ENCODE measurements at regions of chr3 and their contacts with region 1.

Region 1: DNA sequence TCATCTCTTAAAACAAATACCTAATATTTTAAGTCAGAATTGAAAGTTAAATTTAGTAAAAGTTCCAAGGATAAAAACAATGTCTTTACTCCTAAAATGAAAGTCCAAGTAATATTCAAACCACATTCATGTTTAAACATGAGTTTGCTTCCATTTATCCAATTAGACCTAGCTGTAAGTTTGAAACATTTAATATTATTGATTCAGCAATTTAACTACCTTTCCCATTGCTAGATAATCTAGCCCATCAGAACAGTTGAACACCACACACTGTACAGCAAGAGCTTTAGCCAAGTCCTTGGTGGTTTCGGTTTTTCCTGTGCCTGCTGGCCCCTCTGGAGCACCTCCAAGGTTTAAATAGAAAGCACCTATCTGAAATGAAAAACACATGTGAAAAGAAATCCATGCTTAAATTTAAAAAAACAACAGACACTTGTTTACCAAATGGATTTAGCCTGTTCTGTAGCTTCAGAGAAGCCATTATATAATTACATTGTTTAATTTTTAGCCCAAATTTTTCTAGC is 97.8 kb downstream of the DNAH12 start:
- DNase-seq: no peak
- ATAC-seq: no peak
- H3K4me3 ChIP-seq: no peak overlapping the region
- H3K27ac ChIP-seq: no peak overlapping the region
- H3K4me1 ChIP-seq: peaks cover 49% of the 10 kb centered on the region
- H3K27me3 ChIP-seq: no peaks in the 10 kb centered on the region; a peak in 1 of 5 replicates
- CTCF ChIP-seq: no peak
- EP300 ChIP-seq: no peak
- POLR2A ChIP-seq: no peak
- RAD21 ChIP-seq: no peak

Region 2: GRCh38 chr3:57199895-57200297 is 246.5 kb before region 1 on chr3 and contains the start of gene HESX1:
- CTCF ChIA-PET with region 1: no interaction called
- POLR2A ChIA-PET with region 1: no interaction called
- in situ Hi-C with region 1: no loop called
- intact Hi-C with region 1: no loop called
- DNase-seq: no peak
- ATAC-seq: no peak
- H3K4me3 ChIP-seq: no peak within 1 kb of the TSS
- H3K27ac ChIP-seq: no peak within 1 kb of the TSS
- H3K4me1 ChIP-seq: no peaks in the 10 kb centered on the region
- H3K27me3 ChIP-seq: no peaks in the 10 kb centered on the region; a peak in 1 of 5 replicates
- CTCF ChIP-seq: no peak
- EP300 ChIP-seq: no peak
- POLR2A ChIP-seq: no peak
- RAD21 ChIP-seq: no peak
- total RNA-seq, gene HESX1: 0.75 and 0.97 TPM in 2 replicates

Region 3: GRCh38 chr3:57434041-57434440 is 12.3 kb before region 1 on chr3:
- CTCF ChIA-PET with region 1: no interaction called
- POLR2A ChIA-PET with region 1: interaction called, 4 read pairs
- in situ Hi-C with region 1: no loop called
- intact Hi-C with region 1: loop called (anchors 1 kb)
- DNase-seq: peak; percentile 69
- ATAC-seq: peak; percentile 66
- H3K4me3 ChIP-seq: no peak overlapping the region
- H3K27ac ChIP-seq: no peak overlapping the region
- H3K4me1 ChIP-seq: peaks cover 34% of the 10 kb centered on the region
- H3K27me3 ChIP-seq: no peaks in the 10 kb centered on the region
- CTCF ChIP-seq: peak; percentile 39
- EP300 ChIP-seq: no peak
- POLR2A ChIP-seq: no peak
- RAD21 ChIP-seq: peak; percentile 30; the same call in 1 of the 2 replicates

Region 4: DNA sequence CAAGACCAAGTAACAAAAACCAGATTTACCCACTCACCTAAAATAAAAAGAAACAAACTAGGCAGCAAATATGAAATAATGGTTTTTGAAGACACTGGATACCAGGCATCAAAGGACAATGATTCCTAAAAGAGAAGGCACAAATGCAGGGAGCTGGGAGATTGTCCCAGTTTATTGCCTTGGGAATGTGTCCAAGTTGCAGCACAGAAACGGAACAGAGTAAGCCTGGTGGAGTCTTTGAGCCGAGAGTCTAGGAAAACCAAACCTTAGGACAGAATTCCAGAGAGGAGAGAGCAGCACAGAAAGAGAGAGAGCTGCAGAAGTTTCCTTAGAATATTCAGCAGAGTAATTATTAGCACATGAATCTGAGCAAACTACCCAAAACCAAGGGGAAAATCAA is 158.6 kb after region 1 on chr3:
- CTCF ChIA-PET with region 1: no interaction called
- POLR2A ChIA-PET with region 1: no interaction called
- in situ Hi-C with region 1: no loop called
- intact Hi-C with region 1: no loop called
- DNase-seq: no peak
- ATAC-seq: no peak
- H3K4me3 ChIP-seq: no peak overlapping the region
- H3K27ac ChIP-seq: no peak overlapping the region
- H3K4me1 ChIP-seq: peaks cover 12% of the 10 kb centered on the region
- H3K27me3 ChIP-seq: no peaks in the 10 kb centered on the region
- CTCF ChIP-seq: no peak
- EP300 ChIP-seq: no peak
- POLR2A ChIP-seq: no peak
- RAD21 ChIP-seq: no peak

Measured in HepG2 (cell line).